Cardiac septum (tissue), 1 donor: ENCODE measurements at regions of chr9 and their contacts with region 1.

Region 1: GRCh38 chr9:7055201-7055903 is 297.6 kb downstream of the KDM4C start:
- DNase-seq: no peak

Region 2: GRCh38 chr9:7186175-7186574 is 130.8 kb after region 1 on chr9:
- intact Hi-C with region 1: loop called (anchors 10 kb)
- DNase-seq: no peak

Region 3: DNA sequence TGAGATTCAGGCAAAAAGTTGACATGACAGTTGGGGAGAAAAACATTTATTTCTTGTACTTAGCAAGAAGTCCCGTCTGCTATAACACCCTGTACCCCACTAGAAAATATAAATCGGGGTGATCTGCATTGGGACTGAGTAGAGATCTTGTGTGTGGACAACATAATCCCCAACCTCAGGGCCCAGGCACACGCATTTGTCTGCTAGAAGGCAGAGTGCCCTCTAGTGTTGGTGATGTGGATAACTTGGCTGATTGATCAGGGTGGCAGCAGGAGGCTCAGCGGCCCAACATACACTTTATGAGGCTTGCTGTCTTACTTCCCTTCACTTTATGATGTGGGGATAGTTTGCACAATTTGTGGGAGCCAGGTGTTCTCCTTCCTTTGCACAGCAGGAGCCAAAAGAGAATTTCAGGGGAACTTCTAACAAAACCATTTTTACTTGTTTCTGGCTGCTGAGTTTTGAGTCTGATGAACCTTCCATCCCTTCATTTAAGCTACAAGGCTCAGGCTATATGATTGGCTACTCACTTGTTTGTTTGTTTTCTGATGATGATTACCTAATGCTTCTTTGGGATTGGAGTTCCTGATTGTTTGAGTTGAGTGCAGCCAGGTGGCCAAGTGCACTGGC is 481.1 kb after region 1 on chr9:
- intact Hi-C with region 1: loop called (anchors 5 kb)
- DNase-seq: no peak